Posterior cingulate gyrus (tissue), 11 donors: ENCODE measurements at regions of chrX and their contacts with region 1.

Region 1: DNA sequence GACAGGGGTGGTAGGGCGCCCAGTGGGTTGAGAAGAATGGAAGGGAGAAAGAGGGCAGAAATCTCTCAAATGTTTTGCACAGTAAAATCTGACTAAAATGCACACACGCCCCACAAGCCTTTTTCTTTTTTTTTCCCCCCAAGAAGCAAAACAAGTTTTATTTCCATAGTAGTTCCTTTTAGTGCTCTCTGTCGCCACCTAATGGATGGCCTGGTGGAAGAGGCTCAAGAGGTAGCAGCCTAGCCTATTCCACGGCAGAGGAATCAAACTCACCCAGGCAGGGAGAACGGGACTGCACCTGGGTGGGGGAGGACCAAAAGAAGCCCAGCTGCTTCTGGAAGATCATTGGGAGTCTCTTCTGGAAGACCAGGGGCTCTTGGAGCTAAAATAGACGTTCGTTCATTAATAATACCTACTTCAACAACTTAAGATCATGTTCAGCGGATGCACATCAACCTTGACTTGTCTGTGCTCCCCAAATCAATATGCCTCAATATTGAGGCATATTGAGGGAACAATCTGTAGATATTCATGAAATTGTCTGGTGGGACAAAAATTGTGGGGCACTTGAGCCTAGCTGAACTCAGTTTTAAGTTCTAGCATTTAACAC is 31.6 kb upstream of the IRAK1 start:
- DNase-seq: peak in 6 of 10 donors; percentile 60 to 91 (median 68)

Region 2: DNA sequence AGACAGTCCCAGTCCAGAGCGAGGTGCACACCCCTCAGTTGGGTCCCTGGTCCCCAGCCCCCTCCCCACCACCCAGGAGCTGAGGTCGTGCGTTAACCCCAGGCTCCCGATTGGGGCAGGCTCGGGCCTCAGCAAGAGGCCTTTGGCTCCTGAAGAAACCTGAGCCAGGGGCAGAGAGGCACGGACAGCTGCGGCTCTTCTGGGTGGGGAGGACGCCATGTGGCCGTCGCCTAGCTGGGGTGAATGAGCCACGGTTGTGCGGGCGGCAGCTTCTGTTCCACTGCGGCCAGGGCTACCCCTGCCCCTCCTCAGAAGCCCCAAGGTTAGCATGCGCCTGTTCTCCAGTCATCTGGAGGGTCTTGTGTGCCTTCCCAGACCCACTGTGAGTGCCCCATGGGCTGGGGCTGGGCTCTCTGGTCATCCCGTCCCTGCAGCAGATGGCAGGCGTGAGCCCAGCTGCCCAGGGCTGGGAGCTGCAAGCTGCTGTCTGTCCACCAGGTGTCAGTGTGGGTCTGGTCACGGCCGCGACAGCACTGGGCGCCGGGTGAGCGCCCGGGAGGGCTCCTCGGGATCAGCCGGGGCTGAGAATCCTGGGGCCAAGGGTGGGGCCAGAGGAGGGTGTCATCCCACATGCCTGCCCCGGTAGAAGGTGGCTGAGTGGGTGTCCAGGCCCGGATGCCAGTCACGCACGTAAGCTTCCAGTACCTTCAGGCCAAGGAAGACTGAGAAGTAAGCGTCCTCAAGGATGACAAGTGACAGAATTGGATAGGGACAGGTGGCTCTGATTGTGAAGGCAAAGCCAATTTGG is 511.9 kb before region 1 on chrX:
- intact Hi-C with region 1: no loop called
- DNase-seq: peak; percentile 55 to 97 (median 78)

Region 3: GRCh38 chrX:154013614-154014360 is 37.5 kb before region 1 on chrX:
- intact Hi-C with region 1: loop called (anchors 2 kb)
- DNase-seq: peak in 6 of 10 donors; percentile 36 to 88 (median 58)

Region 4: GRCh38 chrX:154082396-154083125 is 31.3 kb after region 1 on chrX:
- intact Hi-C with region 1: no loop called
- DNase-seq: no peak